ENCODE measurements at regions of chr9 and their contacts with region 1.

Region 1: GRCh38 chr9:27573634-27574590 is 631 bp upstream of the C9orf72 start:
- DNase-seq: peak; percentile 74 to 99 (median 98)
- ATAC-seq: peak; percentile 87
- H3K4me3 ChIP-seq: peak overlapping the region; percentile 79
- H3K4me3 Mint-ChIP-seq: peak overlapping the region; percentile 91 to 98 (median 97)
- H3K27ac ChIP-seq: peak overlapping the region; percentile 99
- H3K27ac Mint-ChIP-seq: peak overlapping the region; percentile 96 to 100 (median 99)
- H3K4me1 ChIP-seq: peaks cover 6 to 10% of the 10 kb centered on the region in 2 donors
- H3K4me1 Mint-ChIP-seq: peaks cover 16 to 46% (median 32%) of the 10 kb centered on the region in 7 donors
- H3K27me3 ChIP-seq: no peaks in the 10 kb centered on the region
- H3K27me3 Mint-ChIP-seq: peaks cover 0 to 4% (median 0%) of the 10 kb centered on the region in 5 donors

Region 2: GRCh38 chr9:26946753-26947727 is 626.9 kb before region 1 on chr9 and contains the start of gene PLAA:
- CTCF ChIA-PET with region 1: no interaction called
- POLR2A ChIA-PET with region 1: no interaction called
- intact Hi-C with region 1: loop called (anchors 1 to 2 kb)
- DNase-seq: peak; percentile 81 to 92 (median 88)
- ATAC-seq: peak; percentile 97
- H3K4me3 ChIP-seq: peak within 1 kb of the TSS; percentile 100
- H3K4me3 Mint-ChIP-seq: peak within 1 kb of the TSS; percentile 91 to 99 (median 95)
- H3K27ac ChIP-seq: peak within 1 kb of the TSS; percentile 99
- H3K27ac Mint-ChIP-seq: peak within 1 kb of the TSS; percentile 97 to 100 (median 99)
- H3K4me1 ChIP-seq: peaks cover 22 to 28% of the 10 kb centered on the region in 2 donors
- H3K4me1 Mint-ChIP-seq: peaks cover 33 to 54% (median 50%) of the 10 kb centered on the region in 7 donors
- H3K27me3 ChIP-seq: no peaks in the 10 kb centered on the region
- H3K27me3 Mint-ChIP-seq: peaks cover 0 to 11% (median 0%) of the 10 kb centered on the region in 5 donors
- total RNA-seq, gene PLAA: 22.4 to 33.6 (median 24.7) TPM

Region 3: GRCh38 chr9:27333241-27334052 is 240.5 kb before region 1 on chr9:
- CTCF ChIA-PET with region 1: no interaction called
- POLR2A ChIA-PET with region 1: no interaction called
- intact Hi-C with region 1: loop called (anchors 1 kb)
- DNase-seq: peak in 7 of 9 donors; percentile 42 to 67 (median 58)
- ATAC-seq: peak; percentile 73
- H3K4me3 ChIP-seq: no peak overlapping the region
- H3K4me3 Mint-ChIP-seq: no peak overlapping the region
- H3K27ac ChIP-seq: no peak overlapping the region
- H3K27ac Mint-ChIP-seq: no peak overlapping the region
- H3K4me1 ChIP-seq: no peaks in the 10 kb centered on the region
- H3K4me1 Mint-ChIP-seq: peaks cover 0 to 12% (median 0%) of the 10 kb centered on the region in 7 donors
- H3K27me3 ChIP-seq: no peaks in the 10 kb centered on the region
- H3K27me3 Mint-ChIP-seq: peaks cover 0 to 4% (median 0%) of the 10 kb centered on the region in 5 donors

Region 4: GRCh38 chr9:27407986-27408385 is 165.9 kb before region 1 on chr9:
- CTCF ChIA-PET with region 1: no interaction called
- POLR2A ChIA-PET with region 1: no interaction called
- intact Hi-C with region 1: no loop called
- DNase-seq: no peak
- ATAC-seq: no peak
- H3K4me3 ChIP-seq: no peak overlapping the region
- H3K4me3 Mint-ChIP-seq: no peak overlapping the region
- H3K27ac ChIP-seq: no peak overlapping the region
- H3K27ac Mint-ChIP-seq: no peak overlapping the region
- H3K4me1 ChIP-seq: no peaks in the 10 kb centered on the region
- H3K4me1 Mint-ChIP-seq: peaks cover 0 to 2% (median 0%) of the 10 kb centered on the region in 7 donors
- H3K27me3 ChIP-seq: no peaks in the 10 kb centered on the region
- H3K27me3 Mint-ChIP-seq: peaks cover 0 to 3% (median 0%) of the 10 kb centered on the region in 5 donors

Region 5: GRCh38 chr9:27548055-27548741 is 25.7 kb before region 1 on chr9:
- CTCF ChIA-PET with region 1: no interaction called
- POLR2A ChIA-PET with region 1: interaction called, 3 read pairs
- intact Hi-C with region 1: loop called in 1 of 2 experiments (anchors 1 kb)
- DNase-seq: peak in 1 of 9 donors; percentile 21
- ATAC-seq: no peak
- H3K4me3 ChIP-seq: no peak overlapping the region
- H3K4me3 Mint-ChIP-seq: no peak overlapping the region
- H3K27ac ChIP-seq: no peak overlapping the region
- H3K27ac Mint-ChIP-seq: no peak overlapping the region
- H3K4me1 ChIP-seq: no peaks in the 10 kb centered on the region
- H3K4me1 Mint-ChIP-seq: peaks cover 0 to 2% (median 0%) of the 10 kb centered on the region in 7 donors
- H3K27me3 ChIP-seq: no peaks in the 10 kb centered on the region
- H3K27me3 Mint-ChIP-seq: no peaks in the 10 kb centered on the region